ENCODE measurements at regions of chr12 and their contacts with region 1.

Region 1: DNA sequence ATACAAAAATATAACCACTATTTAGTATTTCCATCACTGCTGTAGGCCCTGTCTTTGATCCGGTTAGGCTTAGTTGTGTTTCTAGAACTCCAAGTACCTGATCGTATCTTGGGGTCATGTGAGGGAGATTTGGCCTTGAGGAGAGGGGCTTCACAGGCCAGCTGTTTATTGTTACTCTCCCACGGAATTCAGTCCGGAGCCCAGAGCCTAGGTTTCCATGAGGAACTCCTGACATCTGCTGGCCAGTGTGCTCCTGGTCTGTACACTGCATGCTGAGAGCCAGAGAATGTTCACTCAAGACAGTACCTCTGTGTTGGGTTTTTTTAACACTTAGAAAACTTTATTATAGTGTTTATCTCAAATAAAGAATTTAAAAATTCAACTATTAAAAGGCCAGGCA is 341.0 kb upstream of the TMEM132C start:
- DNase-seq: peak in 2 of 5 donors; percentile 30 to 32
- ATAC-seq: peak; percentile 67 to 86 (median 76)
- H3K4me3 ChIP-seq: no peak overlapping the region
- H3K27ac ChIP-seq: no peak overlapping the region
- H3K4me1 ChIP-seq: peaks cover 0 to 18% (median 10%) of the 10 kb centered on the region in 12 donors
- H3K27me3 ChIP-seq: no peaks in the 10 kb centered on the region
- CTCF ChIP-seq: peak in 11 of 12 donors; percentile 13 to 74 (median 60)
- POLR2A ChIP-seq: no peak

Region 2: GRCh38 chr12:127677537-127678131 is 248.3 kb before region 1 on chr12:
- intact Hi-C with region 1: loop called in 6 of 10 experiments (anchors 5 to 10 kb)
- DNase-seq: peak; percentile 35 to 64 (median 53)
- ATAC-seq: peak; percentile 51 to 67 (median 60)
- H3K4me3 ChIP-seq: no peak overlapping the region
- H3K27ac ChIP-seq: no peak overlapping the region
- H3K4me1 ChIP-seq: peaks cover 0 to 8% (median 0%) of the 10 kb centered on the region in 12 donors
- H3K27me3 ChIP-seq: no peaks in the 10 kb centered on the region
- CTCF ChIP-seq: peak; percentile 53 to 85 (median 68)
- POLR2A ChIP-seq: no peak

Region 3: DNA sequence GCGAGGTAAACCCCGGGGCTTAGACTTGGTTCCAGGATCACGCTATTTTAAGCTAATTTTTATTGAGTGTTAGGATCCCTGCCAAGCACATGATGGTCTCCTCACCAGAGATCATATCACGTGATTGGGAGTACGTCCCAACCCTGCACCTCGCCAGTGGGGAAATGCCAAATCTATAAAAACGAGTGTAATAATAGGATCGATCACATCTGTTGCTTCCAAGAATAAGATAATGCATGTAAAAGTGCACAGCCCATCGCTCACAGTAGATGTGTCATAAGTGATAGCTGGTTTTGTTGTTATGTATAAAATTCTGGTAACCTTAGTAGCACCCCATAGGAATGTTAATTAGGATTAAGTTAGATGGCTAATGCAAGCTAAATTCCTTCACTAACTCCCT is 240.0 kb before region 1 on chr12:
- intact Hi-C with region 1: loop called in 3 of 10 experiments (anchors 10 kb)
- DNase-seq: no peak
- ATAC-seq: no peak
- H3K4me3 ChIP-seq: no peak overlapping the region
- H3K27ac ChIP-seq: no peak overlapping the region
- H3K4me1 ChIP-seq: no peaks in the 10 kb centered on the region
- H3K27me3 ChIP-seq: peaks cover 0 to 6% (median 0%) of the 10 kb centered on the region in 9 donors
- CTCF ChIP-seq: no peak
- POLR2A ChIP-seq: no peak

Region 4: DNA sequence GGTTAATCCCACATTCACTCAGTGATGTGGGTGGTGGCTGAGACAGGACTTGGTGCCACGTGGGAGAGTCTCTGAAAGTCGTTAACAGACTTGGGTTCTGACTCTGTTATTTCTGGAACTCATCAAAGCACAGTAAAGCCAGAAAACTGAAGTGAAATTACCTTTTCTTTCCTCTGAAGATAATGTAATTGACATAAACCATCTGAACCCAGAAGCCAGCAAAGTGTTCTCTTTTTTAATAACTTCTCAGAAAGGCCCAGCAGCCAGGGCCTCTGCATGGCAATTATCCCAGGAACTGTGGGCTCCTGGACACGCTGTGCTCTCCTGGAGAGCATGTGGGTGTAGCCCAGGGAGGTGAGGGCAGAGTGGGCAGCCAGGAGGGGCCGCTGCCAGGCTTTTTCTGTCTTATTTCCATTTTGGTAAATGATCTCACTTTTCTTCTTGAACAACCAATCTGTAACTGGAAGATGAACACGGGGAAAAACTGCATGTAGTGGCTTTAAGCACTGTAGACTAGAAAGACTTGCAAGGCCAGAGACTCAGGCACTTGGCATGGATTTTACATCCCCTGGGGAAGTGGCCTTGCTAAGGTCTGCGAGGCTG is 103.1 kb before region 1 on chr12:
- intact Hi-C with region 1: loop called in 1 of 10 experiments (anchors 10 kb)
- DNase-seq: peak in 1 of 5 donors; percentile 25
- ATAC-seq: peak; percentile 66 to 86 (median 73)
- H3K4me3 ChIP-seq: no peak overlapping the region
- H3K27ac ChIP-seq: peak overlapping the region in 2 of 12 donors; percentile 22 to 43
- H3K4me1 ChIP-seq: peaks cover 0 to 8% (median 0%) of the 10 kb centered on the region in 12 donors
- H3K27me3 ChIP-seq: no peaks in the 10 kb centered on the region
- CTCF ChIP-seq: no peak
- POLR2A ChIP-seq: no peak

Region 5: DNA sequence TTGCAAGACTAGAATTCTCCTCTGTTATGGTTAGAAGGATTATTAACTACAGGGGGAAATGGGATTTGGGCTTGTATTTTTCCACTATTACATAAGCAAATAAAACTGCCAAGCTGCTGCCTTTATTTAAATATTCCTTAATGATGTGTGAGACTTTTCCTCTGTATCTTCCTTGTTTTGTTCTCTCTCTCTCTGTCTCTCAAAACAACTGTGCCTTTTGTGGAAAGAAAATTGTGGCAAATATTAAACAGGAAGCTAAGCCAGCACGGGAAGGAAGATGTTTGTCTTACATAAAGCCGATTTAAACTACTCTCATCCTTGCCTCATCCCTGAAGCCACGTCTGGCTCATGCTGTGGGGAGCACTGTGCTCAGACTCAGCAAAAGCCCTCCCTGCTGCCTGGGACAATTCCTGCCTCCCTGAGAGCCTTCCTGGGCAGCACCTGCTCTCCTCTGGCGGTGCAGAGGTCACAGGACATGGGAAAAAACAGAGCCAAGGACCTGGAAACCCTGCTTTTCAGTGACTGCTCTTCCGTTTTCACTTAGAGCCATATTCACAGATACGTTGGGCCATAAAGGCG is 660.6 kb after region 1 on chr12:
- intact Hi-C with region 1: no loop called
- DNase-seq: no peak
- ATAC-seq: no peak
- H3K4me3 ChIP-seq: no peak overlapping the region
- H3K27ac ChIP-seq: no peak overlapping the region
- H3K4me1 ChIP-seq: no peaks in the 10 kb centered on the region
- H3K27me3 ChIP-seq: no peaks in the 10 kb centered on the region
- CTCF ChIP-seq: no peak
- POLR2A ChIP-seq: no peak